Right ventricle myocardium superior (tissue), 1 donor: ENCODE measurements at regions of chr7 and their contacts with region 1.

Region 1: DNA sequence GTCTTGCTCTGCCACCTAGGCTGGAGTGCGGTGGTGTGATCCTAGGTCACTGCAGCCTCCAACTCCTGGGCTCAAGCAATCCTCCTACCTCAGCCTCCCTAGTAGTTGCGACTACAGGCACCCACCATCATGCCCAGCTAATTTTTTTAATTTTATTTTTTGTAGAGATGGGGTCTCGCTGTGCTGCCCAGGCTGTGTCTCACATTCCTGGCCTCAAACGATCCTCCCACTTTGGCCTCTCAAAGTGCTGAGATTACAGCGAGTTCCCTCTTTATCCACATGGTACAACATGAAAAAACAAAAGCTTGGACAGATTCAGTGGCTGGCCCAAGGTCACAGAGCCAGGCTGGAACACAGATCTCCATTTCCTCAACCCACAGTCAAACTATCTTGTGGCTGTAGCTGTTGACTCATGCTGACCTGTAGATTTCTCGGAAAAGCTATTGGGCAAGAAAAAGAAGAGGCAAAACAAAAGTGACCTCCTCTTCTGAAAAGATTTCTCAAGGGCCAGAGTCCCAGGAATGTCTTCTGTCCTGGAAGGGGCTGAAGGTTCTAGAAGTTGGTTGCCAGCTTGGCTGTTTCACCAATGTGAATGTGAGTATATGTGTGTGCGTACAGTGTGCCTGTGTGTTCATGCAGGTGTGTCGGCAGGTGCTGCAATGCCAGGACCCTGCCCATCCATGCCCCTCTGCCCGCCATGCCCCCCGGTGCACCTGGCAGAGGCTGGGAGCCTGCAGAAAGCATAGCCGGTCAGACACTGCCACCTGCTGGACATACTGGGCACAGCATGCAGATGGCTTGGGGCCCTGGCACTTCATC is 28.4 kb downstream of the TMEM130 start:
- DNase-seq: peak; percentile 78
- ATAC-seq: peak; percentile 83

Region 2: GRCh38 chr7:98434095-98434494 is 407.3 kb before region 1 on chr7:
- intact Hi-C with region 1: loop called (anchors 2 kb)
- DNase-seq: no peak
- ATAC-seq: no peak

Region 3: DNA sequence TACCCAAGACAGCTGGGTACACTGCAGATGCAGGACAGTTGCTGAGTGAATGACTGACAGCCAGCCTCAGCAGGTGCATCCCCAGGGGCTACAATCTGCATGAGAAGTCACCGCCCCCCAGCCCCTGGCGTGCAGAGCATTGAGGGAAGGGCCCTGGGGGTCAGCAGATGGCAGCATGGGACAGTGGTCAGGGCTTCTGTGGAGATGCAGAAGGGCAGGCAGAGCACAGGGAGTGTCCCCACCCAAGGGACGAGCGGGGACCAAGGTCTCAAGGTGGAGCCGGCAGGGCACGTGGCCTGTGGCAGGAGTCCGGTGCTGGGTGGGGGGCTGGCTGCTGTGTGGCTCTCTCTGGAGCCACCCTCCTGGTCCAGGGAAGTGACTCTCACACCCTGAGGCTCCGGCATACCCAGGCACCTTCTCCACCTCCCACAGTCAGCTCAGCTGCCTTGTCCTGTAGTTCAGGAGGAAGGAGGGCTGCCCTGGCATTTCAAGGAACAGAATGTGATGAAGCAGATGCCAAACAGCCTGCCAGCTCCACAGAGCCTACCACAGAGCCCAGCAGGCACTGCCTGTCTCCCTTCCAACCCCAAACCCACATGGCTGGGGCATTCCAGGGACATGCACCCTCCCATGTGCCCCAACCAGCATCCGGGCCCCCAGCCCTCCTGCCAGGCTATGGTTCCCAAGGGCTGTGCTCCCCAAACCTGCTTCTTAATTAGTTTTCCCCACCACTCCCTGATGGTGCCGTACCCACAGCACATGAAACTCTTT is 86.1 kb before region 1 on chr7:
- intact Hi-C with region 1: loop called (anchors 5 kb)
- DNase-seq: no peak
- ATAC-seq: peak; percentile 87

Region 4: GRCh38 chr7:98802088-98802780 is 39.2 kb before region 1 on chr7:
- intact Hi-C with region 1: no loop called
- DNase-seq: peak; percentile 47
- ATAC-seq: peak; percentile 49